ENCODE measurements at regions of chr11 and their contacts with region 1.

Region 1: DNA sequence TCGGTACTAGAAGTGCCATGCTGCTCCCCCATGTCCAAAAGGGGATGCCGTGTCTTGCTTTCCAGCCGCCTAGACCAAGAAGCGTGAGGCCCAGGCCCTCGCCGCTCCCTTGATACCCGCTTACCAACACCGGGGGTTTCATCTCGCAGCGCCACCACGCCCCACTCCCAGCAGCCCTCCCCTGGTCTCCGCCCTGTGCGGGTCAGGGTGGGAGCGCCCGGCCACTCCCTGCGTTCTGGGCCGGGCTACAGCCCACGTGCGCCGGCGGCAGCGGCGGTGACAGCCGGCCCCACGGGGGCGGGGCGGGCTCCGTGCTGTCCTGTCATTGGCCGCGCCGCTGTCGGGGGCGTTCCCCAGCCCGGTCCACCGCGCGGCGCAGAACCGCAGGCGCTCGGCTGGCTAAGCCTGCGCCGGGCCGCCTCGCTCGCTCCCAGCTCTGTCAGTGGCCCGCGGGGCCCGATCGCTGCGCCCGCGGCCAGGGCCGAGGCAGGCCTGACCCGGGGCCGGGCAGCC is at the start of gene MICAL2:
- DNase-seq: peak; percentile 53 to 93 (median 73)
- ATAC-seq: peak; percentile 97
- H3K4me3 ChIP-seq: peak within 1 kb of the TSS; percentile 65
- H3K4me3 Mint-ChIP-seq: peak within 1 kb of the TSS; percentile 85
- H3K27ac ChIP-seq: no peak within 1 kb of the TSS
- H3K27ac Mint-ChIP-seq: peak within 1 kb of the TSS; percentile 12
- H3K4me1 ChIP-seq: peaks cover 32% of the 10 kb centered on the region
- H3K4me1 Mint-ChIP-seq: peaks cover 22% of the 10 kb centered on the region
- H3K27me3 ChIP-seq: no peaks in the 10 kb centered on the region
- H3K27me3 Mint-ChIP-seq: no peaks in the 10 kb centered on the region
- CTCF ChIP-seq: no peak
- total RNA-seq, gene MICAL2: 12.8 to 14.1 TPM

Region 2: GRCh38 chr11:12087075-12088004 is 22.9 kb before region 1 on chr11:
- CTCF ChIA-PET with region 1: interaction called, 3 read pairs
- POLR2A ChIA-PET with region 1: interaction called, 3 read pairs
- intact Hi-C with region 1: loop called in 1 of 2 experiments (anchors 2 kb)
- DNase-seq: peak in 6 of 14 experiments; percentile 15 to 82 (median 58)
- ATAC-seq: peak; percentile 79
- H3K4me3 ChIP-seq: no peak overlapping the region
- H3K4me3 Mint-ChIP-seq: peak overlapping the region; percentile 59
- H3K27ac ChIP-seq: peak overlapping the region in 1 of 2 donors; percentile 46
- H3K27ac Mint-ChIP-seq: peak overlapping the region; percentile 79
- H3K4me1 ChIP-seq: peaks cover 65% of the 10 kb centered on the region
- H3K4me1 Mint-ChIP-seq: peaks cover 72% of the 10 kb centered on the region
- H3K27me3 ChIP-seq: no peaks in the 10 kb centered on the region
- H3K27me3 Mint-ChIP-seq: no peaks in the 10 kb centered on the region
- CTCF ChIP-seq: no peak

Region 3: GRCh38 chr11:12148466-12148865 is 38.2 kb after region 1 on chr11:
- CTCF ChIA-PET with region 1: no interaction called
- POLR2A ChIA-PET with region 1: no interaction called
- intact Hi-C with region 1: no loop called
- DNase-seq: no peak
- ATAC-seq: no peak
- H3K4me3 ChIP-seq: no peak overlapping the region
- H3K4me3 Mint-ChIP-seq: no peak overlapping the region
- H3K27ac ChIP-seq: no peak overlapping the region
- H3K27ac Mint-ChIP-seq: no peak overlapping the region
- H3K4me1 ChIP-seq: peaks cover 39% of the 10 kb centered on the region
- H3K4me1 Mint-ChIP-seq: peaks cover 63% of the 10 kb centered on the region
- H3K27me3 ChIP-seq: no peaks in the 10 kb centered on the region
- H3K27me3 Mint-ChIP-seq: no peaks in the 10 kb centered on the region
- CTCF ChIP-seq: no peak

Region 4: GRCh38 chr11:12200279-12201010 is 90.2 kb after region 1 on chr11:
- CTCF ChIA-PET with region 1: no interaction called
- POLR2A ChIA-PET with region 1: no interaction called
- intact Hi-C with region 1: loop called in 1 of 2 experiments (anchors 5 kb)
- DNase-seq: peak in 2 of 14 experiments; percentile 27 to 28
- ATAC-seq: no peak
- H3K4me3 ChIP-seq: no peak overlapping the region
- H3K4me3 Mint-ChIP-seq: no peak overlapping the region
- H3K27ac ChIP-seq: peak overlapping the region in 1 of 2 donors; percentile 22
- H3K27ac Mint-ChIP-seq: peak overlapping the region; percentile 89
- H3K4me1 ChIP-seq: peaks cover 53% of the 10 kb centered on the region
- H3K4me1 Mint-ChIP-seq: peaks cover 70% of the 10 kb centered on the region
- H3K27me3 ChIP-seq: no peaks in the 10 kb centered on the region
- H3K27me3 Mint-ChIP-seq: no peaks in the 10 kb centered on the region
- CTCF ChIP-seq: no peak

Region 5: GRCh38 chr11:12229450-12230229 is 119.4 kb after region 1 on chr11:
- CTCF ChIA-PET with region 1: no interaction called
- POLR2A ChIA-PET with region 1: interaction called, 13 read pairs
- intact Hi-C with region 1: loop called in 1 of 2 experiments (anchors 5 kb)
- DNase-seq: no peak
- ATAC-seq: no peak
- H3K4me3 ChIP-seq: no peak overlapping the region
- H3K4me3 Mint-ChIP-seq: no peak overlapping the region
- H3K27ac ChIP-seq: no peak overlapping the region
- H3K27ac Mint-ChIP-seq: no peak overlapping the region
- H3K4me1 ChIP-seq: peaks cover 16% of the 10 kb centered on the region
- H3K4me1 Mint-ChIP-seq: peaks cover 17% of the 10 kb centered on the region
- H3K27me3 ChIP-seq: no peaks in the 10 kb centered on the region
- H3K27me3 Mint-ChIP-seq: no peaks in the 10 kb centered on the region
- CTCF ChIP-seq: no peak

Region 6: DNA sequence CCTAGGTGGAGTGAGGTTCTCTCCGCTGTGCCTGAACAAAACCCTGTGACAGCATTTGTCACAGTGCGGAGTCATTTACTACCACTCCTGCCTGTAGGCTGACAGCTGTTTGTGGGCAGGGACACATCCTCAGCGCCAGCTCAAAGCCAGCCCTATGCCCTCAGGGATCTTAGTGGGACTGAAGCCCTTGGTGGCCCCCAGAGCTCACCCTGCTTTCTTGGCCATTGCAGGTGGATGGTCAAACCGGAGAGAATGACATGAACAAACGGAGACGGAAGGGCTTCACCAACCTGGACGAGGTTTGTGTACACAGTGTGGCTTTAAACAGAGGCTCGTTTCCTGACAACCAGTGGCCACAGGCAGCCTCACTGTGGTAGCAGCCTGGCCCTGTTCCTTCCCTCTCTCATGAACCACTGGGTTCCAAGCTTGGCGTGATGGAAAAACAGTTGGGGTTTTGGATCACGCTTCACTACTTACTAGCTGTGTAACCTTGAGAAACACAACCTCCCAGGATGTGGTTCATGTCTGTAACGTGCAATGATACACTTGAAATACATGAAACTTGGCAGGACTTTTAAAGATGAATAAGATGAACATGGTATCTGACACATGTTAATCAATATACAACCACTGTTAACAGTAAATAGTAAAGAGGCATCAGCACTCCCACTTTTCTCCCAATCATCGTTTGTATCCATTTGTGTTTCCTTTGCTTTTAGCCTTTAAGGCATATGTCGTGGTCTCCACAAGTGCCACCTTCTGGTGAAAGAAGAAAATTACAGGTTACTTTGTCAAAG is 125.9 kb after region 1 on chr11:
- CTCF ChIA-PET with region 1: interaction called, 3 read pairs
- POLR2A ChIA-PET with region 1: interaction called, 4 read pairs
- intact Hi-C with region 1: loop called (anchors 1 to 5 kb)
- DNase-seq: peak in 9 of 14 experiments; percentile 4 to 83 (median 40)
- ATAC-seq: peak; percentile 85
- H3K4me3 ChIP-seq: peak overlapping the region; percentile 7
- H3K4me3 Mint-ChIP-seq: peak overlapping the region; percentile 82
- H3K27ac ChIP-seq: peak overlapping the region in 1 of 2 donors; percentile 59
- H3K27ac Mint-ChIP-seq: peak overlapping the region; percentile 92
- H3K4me1 ChIP-seq: peaks cover 15% of the 10 kb centered on the region
- H3K4me1 Mint-ChIP-seq: peaks cover 30% of the 10 kb centered on the region
- H3K27me3 ChIP-seq: no peaks in the 10 kb centered on the region
- H3K27me3 Mint-ChIP-seq: no peaks in the 10 kb centered on the region
- CTCF ChIP-seq: peak; percentile 92

Region 7: DNA sequence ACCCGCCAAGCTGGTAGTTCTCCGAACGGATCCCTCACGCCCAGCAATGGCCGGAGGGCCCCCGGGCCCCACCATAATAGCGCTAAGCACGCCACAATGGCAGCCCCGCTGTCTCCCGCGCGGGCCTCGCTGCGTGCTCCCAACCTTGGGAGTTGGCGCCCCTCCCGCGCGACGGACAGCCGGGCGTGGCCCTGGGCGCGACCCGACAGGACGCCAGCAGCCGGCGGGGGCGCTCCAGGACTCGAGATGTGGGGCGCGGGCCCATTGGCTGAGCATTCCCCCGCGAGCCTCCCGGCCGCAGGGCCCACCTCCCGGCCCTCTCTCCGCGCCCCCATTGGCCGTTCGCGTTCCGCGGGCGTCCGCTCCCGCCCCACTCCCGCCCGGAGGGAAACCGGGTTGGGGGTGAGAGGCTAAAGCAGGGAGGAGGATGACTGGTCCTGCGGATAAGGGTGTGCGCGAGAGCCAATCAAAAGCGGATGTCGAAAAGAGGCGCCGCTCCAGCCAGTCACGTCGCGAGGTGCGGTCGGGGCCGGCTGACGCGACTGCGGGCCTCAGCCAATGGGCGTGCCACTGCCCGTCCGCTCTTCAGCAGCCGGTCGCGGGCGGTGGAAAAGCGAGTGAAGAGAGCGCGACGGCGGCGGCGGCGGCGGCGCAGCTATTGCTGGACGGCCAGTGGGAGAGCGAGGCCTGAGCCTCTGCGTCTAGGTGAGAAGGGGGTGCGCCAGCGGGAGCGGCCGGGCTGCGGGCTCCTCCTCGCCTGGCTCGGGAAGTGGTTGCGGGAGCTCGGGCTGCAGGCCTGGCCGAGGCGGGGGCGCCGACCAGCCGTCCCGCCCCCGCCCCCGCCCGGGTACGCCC is 1558.1 kb after region 1 on chr11 and contains the start of gene FAR1:
- CTCF ChIA-PET with region 1: no interaction called
- POLR2A ChIA-PET with region 1: no interaction called
- intact Hi-C with region 1: loop called in 1 of 2 experiments (anchors 10 kb)
- DNase-seq: peak; percentile 90 to 98 (median 94)
- ATAC-seq: peak; percentile 88
- H3K4me3 ChIP-seq: peak within 1 kb of the TSS; percentile 85
- H3K4me3 Mint-ChIP-seq: peak within 1 kb of the TSS; percentile 98
- H3K27ac ChIP-seq: peak within 1 kb of the TSS; percentile 33 to 47
- H3K27ac Mint-ChIP-seq: peak within 1 kb of the TSS; percentile 88
- H3K4me1 ChIP-seq: peaks cover 28% of the 10 kb centered on the region
- H3K4me1 Mint-ChIP-seq: peaks cover 51% of the 10 kb centered on the region
- H3K27me3 ChIP-seq: no peaks in the 10 kb centered on the region
- H3K27me3 Mint-ChIP-seq: peaks cover 8% of the 10 kb centered on the region
- CTCF ChIP-seq: peak; percentile 70
- total RNA-seq, gene FAR1: 28.4 to 29.0 TPM